Stomach (tissue), 19 donors: ENCODE measurements at regions of chr12 and their contacts with region 1.

Region 1: DNA sequence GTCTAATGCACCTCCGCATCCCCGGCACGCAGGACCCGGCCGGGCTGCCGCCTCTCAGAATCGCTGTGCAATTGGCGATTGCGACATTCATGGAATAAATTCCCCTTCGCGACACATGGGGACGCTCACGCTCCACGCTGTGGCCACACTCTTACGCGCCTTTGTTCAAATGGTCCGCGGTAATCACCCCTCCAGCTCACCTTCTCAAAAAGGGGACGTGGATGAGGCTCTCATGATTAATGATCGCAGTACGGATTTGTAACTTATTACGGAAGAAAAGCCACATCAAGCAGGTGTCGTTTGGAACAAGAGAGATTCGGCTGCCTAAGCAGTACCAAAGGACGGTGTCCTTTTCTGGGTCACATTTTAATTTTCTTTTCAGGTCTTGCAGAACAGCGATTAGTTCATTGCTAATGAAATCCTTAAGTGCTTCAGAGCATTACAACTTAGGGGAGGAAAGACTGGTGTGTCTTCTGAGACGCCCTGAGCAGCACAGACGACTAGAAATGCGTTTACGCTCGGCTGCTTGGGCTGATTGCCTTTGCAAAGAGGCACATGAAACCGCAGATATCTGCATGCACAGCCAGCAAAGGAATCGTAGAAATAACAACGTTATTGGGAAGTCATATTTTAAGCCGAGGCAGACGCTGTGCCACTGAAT is 37.3 kb upstream of the ADGRD1 start:
- DNase-seq: peak; percentile 54 to 90
- H3K4me3 ChIP-seq: peak overlapping the region in 2 of 4 donors; percentile 11 to 19
- H3K27ac ChIP-seq: no peak overlapping the region
- H3K4me1 ChIP-seq: peaks cover 0 to 9% (median 5%) of the 10 kb centered on the region in 4 donors
- H3K27me3 ChIP-seq: peaks cover 0 to 47% (median 12%) of the 10 kb centered on the region in 3 donors
- CTCF ChIP-seq: peak in 5 of 7 experiments; percentile 80 to 88 (median 87)
- EP300 ChIP-seq: no peak
- POLR2A ChIP-seq: no peak

Region 2: GRCh38 chr12:131132118-131132892 is 215.9 kb after region 1 on chr12:
- intact Hi-C with region 1: loop called (anchors 10 kb)
- DNase-seq: peak; percentile 64 to 89
- H3K4me3 ChIP-seq: no peak overlapping the region
- H3K27ac ChIP-seq: peak overlapping the region in 1 of 5 donors; percentile 70
- H3K4me1 ChIP-seq: peaks cover 5 to 17% (median 11%) of the 10 kb centered on the region in 4 donors
- H3K27me3 ChIP-seq: no peaks in the 10 kb centered on the region
- CTCF ChIP-seq: peak in 5 of 7 experiments; percentile 53 to 78 (median 70)
- EP300 ChIP-seq: no peak
- POLR2A ChIP-seq: no peak